HepG2 (cell line): ENCODE measurements at regions of chr12 and their contacts with region 1.

Region 1: GRCh38 chr12:125999628-126000027 is 934.4 kb downstream of the AACS start:
- DNase-seq: no peak
- ATAC-seq: no peak
- H3K4me3 ChIP-seq: no peak overlapping the region
- H3K27ac ChIP-seq: no peak overlapping the region
- H3K4me1 ChIP-seq: no peaks in the 10 kb centered on the region
- H3K27me3 ChIP-seq: no peaks in the 10 kb centered on the region
- CTCF ChIP-seq: no peak
- EP300 ChIP-seq: no peak
- POLR2A ChIP-seq: no peak
- RAD21 ChIP-seq: no peak

Region 2: GRCh38 chr12:126038434-126038833 is 38.8 kb after region 1 on chr12:
- CTCF ChIA-PET with region 1: no interaction called
- POLR2A ChIA-PET with region 1: no interaction called
- in situ Hi-C with region 1: no loop called
- intact Hi-C with region 1: no loop called
- DNase-seq: no peak
- ATAC-seq: no peak
- H3K4me3 ChIP-seq: no peak overlapping the region
- H3K27ac ChIP-seq: no peak overlapping the region
- H3K4me1 ChIP-seq: peaks cover 9% of the 10 kb centered on the region
- H3K27me3 ChIP-seq: no peaks in the 10 kb centered on the region
- CTCF ChIP-seq: no peak
- EP300 ChIP-seq: no peak
- POLR2A ChIP-seq: no peak
- RAD21 ChIP-seq: no peak

Region 3: GRCh38 chr12:126591533-126591932 is 591.9 kb after region 1 on chr12:
- CTCF ChIA-PET with region 1: no interaction called
- POLR2A ChIA-PET with region 1: no interaction called
- in situ Hi-C with region 1: no loop called
- intact Hi-C with region 1: loop called (anchors 5 kb)
- DNase-seq: no peak
- ATAC-seq: no peak
- H3K4me3 ChIP-seq: no peak overlapping the region
- H3K27ac ChIP-seq: no peak overlapping the region
- H3K4me1 ChIP-seq: no peaks in the 10 kb centered on the region
- H3K27me3 ChIP-seq: no peaks in the 10 kb centered on the region
- CTCF ChIP-seq: no peak
- EP300 ChIP-seq: no peak
- POLR2A ChIP-seq: no peak
- RAD21 ChIP-seq: no peak